ENCODE measurements at regions of chr6 and their contacts with region 1.

Region 1: GRCh38 chr6:87066449-87067333 is 28.2 kb downstream of the CGA start:
- DNase-seq: no peak
- ATAC-seq: no peak

Region 2: DNA sequence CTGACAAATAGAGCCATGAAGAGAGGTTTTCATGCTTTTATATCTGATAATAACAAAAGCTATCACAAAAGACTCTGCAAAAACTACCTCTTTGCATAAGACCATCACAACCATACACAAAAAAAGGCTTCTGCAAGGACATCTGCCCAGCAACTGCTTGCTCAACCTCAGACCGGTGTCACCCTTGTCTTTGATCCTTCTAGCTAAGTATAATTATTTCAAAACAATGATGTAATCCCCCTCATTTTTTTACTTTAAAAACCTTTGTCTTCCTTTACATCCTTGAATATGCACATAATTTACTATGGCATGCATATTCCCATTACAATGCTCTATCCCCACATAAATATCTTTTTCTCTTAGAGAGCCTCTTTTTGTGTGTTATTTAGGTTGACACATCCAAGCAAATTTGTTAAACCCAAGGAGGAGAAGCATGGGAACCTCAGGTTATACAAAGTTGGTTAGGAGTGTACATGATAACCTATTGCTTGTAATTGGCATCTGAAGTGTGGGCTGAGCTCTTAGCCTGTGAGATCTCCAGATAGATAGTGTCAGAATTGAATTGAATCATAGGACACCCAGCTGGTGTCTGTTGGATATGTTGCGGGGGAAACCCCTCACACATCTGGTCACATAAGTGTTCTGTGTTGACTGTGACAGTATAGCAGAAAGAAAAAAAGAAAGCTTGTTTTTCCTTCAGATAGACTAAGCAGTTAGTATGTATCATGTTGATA is 48.9 kb after region 1 on chr6:
- intact Hi-C with region 1: no loop called
- DNase-seq: no peak
- ATAC-seq: no peak

Region 3: GRCh38 chr6:87182321-87182720 is 115.6 kb after region 1 on chr6:
- intact Hi-C with region 1: no loop called
- DNase-seq: no peak
- ATAC-seq: no peak

Region 4: GRCh38 chr6:87766211-87766610 is 699.5 kb after region 1 on chr6:
- intact Hi-C with region 1: loop called (anchors 5 kb)
- DNase-seq: no peak
- ATAC-seq: no peak